Activated T-helper 1 cell treated with anti-CD3 and anti-CD28 coated beads, Interleukin-12 subunit alpha, Interleukin-12 subunit beta, Interleukin-2, Interleukin-4 antibody, amounts not matched to agents 30 ng/mL and 10 ng/mL and 1 ng/mL, durations not matched to agents 14 hours and 24 hours and 36 hours (primary cell): ENCODE measurements at regions of chr7 and their contacts with region 1.

Region 1: GRCh38 chr7:24595671-24596418 is 22.6 kb downstream of the PALS2 start:
- DNase-seq: no peak
- H3K4me3 Mint-ChIP-seq: no peak overlapping the region
- H3K27ac Mint-ChIP-seq: no peak overlapping the region
- H3K4me1 Mint-ChIP-seq: no peaks in the 10 kb centered on the region
- H3K27me3 Mint-ChIP-seq: no peaks in the 10 kb centered on the region

Region 2: GRCh38 chr7:24580283-24580946 is 15.4 kb before region 1 on chr7:
- intact Hi-C with region 1: loop called (anchors 2 kb)
- DNase-seq: no peak
- H3K4me3 Mint-ChIP-seq: no peak overlapping the region
- H3K27ac Mint-ChIP-seq: no peak overlapping the region
- H3K4me1 Mint-ChIP-seq: peaks cover 19% of the 10 kb centered on the region
- H3K27me3 Mint-ChIP-seq: no peaks in the 10 kb centered on the region

Region 3: GRCh38 chr7:24622646-24623182 is 26.9 kb after region 1 on chr7:
- intact Hi-C with region 1: no loop called
- DNase-seq: no peak
- H3K4me3 Mint-ChIP-seq: no peak overlapping the region
- H3K27ac Mint-ChIP-seq: no peak overlapping the region
- H3K4me1 Mint-ChIP-seq: no peaks in the 10 kb centered on the region
- H3K27me3 Mint-ChIP-seq: no peaks in the 10 kb centered on the region